Caco-2 (cell line): ENCODE measurements at regions of chr13 and their contacts with region 1.

Region 1: DNA sequence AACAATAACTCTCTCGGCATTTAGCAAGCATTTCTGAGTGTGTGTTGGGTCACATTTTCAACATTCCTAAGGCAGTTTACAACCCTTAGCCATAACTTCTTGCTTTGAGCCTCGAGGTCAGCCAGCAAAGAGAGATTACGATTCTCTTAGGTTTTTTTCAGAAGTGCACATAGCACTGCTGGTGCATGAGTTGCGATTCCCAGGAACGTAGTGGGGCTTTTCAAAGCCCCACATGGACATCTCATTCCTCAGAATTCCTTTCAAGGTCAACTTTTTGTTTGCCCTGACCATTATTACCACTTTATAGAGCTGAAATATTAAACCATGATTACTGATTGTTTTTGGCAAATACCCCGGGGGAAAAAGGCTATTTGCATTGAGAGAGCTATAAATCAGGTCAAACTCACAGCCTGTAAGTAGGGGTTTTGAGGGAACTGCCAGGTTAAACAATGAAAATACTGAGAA is 705.3 kb downstream of the GPC5 start:
- DNase-seq: peak; percentile 81 to 88
- H3K4me3 ChIP-seq: peak overlapping the region; percentile 11; the same call in 1 of the 2 replicates
- H3K4me3 Mint-ChIP-seq: peak overlapping the region; percentile 71
- H3K27ac Mint-ChIP-seq: peak overlapping the region; percentile 93
- H3K4me1 ChIP-seq: peaks cover 46% of the 10 kb centered on the region
- H3K4me1 Mint-ChIP-seq: peaks cover 26% of the 10 kb centered on the region
- H3K27me3 ChIP-seq: no peaks in the 10 kb centered on the region
- H3K27me3 Mint-ChIP-seq: no peaks in the 10 kb centered on the region
- CTCF ChIP-seq: no peak

Region 2: DNA sequence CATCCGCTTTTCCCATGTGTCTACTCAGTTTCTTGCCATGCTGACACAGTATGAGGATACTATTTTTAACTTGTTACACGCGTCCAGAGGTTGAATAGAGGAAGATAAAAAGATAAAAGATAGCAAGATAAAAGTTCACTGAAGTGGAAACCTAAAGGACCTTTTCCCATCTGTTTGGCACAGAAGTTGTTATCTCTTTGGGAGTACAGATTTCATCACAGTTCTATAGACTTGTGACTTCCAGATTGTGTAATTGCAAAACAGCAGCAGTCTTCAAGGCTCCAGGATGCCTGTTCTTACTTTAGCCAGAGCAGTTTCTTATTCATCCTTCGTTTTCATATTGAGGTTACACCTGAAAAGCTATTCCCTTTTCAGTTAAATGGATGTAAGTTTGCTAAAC is 336.1 kb before region 1 on chr13:
- CTCF ChIA-PET with region 1: no interaction called
- POLR2A ChIA-PET with region 1: no interaction called
- intact Hi-C with region 1: loop called (anchors 5 kb)
- DNase-seq: peak; percentile 52 to 60
- H3K4me3 ChIP-seq: no peak overlapping the region
- H3K4me3 Mint-ChIP-seq: peak overlapping the region; percentile 21
- H3K27ac Mint-ChIP-seq: peak overlapping the region; percentile 7
- H3K4me1 ChIP-seq: peaks cover 86% of the 10 kb centered on the region
- H3K4me1 Mint-ChIP-seq: peaks cover 53% of the 10 kb centered on the region
- H3K27me3 ChIP-seq: no peaks in the 10 kb centered on the region
- H3K27me3 Mint-ChIP-seq: no peaks in the 10 kb centered on the region
- CTCF ChIP-seq: no peak

Region 3: DNA sequence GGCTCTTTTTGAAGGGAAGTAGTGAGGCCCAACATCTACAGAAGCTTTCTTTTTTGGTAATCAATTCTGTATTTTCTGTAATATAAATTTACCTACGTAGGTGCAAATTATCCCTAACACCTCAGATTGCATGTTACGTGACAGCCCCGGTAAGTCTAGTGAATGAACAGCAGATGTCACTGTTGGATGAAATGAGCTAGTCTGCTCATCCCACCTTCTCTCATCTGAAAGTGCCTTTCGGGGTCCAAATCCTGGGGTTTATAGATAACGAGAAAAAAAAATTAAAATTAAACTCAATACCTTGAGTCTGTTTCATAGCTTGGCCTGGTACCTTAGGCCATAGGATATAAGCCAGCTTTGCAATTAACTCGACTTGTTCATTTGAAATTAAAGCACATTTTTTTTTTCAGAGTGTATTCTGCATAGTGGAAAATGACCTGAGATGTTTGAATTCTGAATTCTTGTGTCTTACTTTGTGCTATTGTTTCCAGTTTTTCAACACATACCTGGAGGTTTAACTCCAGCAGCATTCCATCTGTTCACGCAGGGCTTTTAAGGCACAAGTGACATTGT is 157.1 kb before region 1 on chr13:
- CTCF ChIA-PET with region 1: no interaction called
- POLR2A ChIA-PET with region 1: no interaction called
- intact Hi-C with region 1: loop called (anchors 1 kb)
- DNase-seq: peak in 1 of 2 experiments; percentile 26
- H3K4me3 ChIP-seq: no peak overlapping the region
- H3K4me3 Mint-ChIP-seq: no peak overlapping the region
- H3K27ac Mint-ChIP-seq: no peak overlapping the region
- H3K4me1 ChIP-seq: no peaks in the 10 kb centered on the region
- H3K4me1 Mint-ChIP-seq: no peaks in the 10 kb centered on the region
- H3K27me3 ChIP-seq: no peaks in the 10 kb centered on the region
- H3K27me3 Mint-ChIP-seq: peaks cover 8% of the 10 kb centered on the region
- CTCF ChIP-seq: peak; percentile 67 to 81

Region 4: DNA sequence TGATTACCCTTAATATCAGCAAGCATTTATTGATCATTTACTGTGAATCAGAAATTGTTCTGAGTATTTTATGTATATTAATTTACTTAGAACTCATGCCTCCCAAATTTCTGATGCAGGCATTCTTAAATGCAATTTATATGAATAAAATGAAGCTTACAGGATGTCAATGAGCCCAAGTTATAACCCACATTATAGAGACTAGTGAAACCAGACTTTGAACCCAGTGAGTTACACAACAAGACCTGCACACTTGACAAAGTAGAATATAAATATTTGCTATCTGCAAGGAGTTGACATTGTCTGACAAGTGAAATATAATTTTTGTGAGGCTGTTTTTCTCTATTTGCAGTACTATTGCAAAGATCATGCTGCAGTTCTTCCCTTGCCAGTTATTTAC is 49.3 kb before region 1 on chr13:
- CTCF ChIA-PET with region 1: no interaction called
- POLR2A ChIA-PET with region 1: no interaction called
- intact Hi-C with region 1: loop called (anchors 1 kb)
- DNase-seq: peak in 1 of 2 experiments; percentile 56
- H3K4me3 ChIP-seq: no peak overlapping the region
- H3K4me3 Mint-ChIP-seq: no peak overlapping the region
- H3K27ac Mint-ChIP-seq: no peak overlapping the region
- H3K4me1 ChIP-seq: peaks cover 11% of the 10 kb centered on the region
- H3K4me1 Mint-ChIP-seq: peaks cover 6% of the 10 kb centered on the region
- H3K27me3 ChIP-seq: no peaks in the 10 kb centered on the region
- H3K27me3 Mint-ChIP-seq: no peaks in the 10 kb centered on the region
- CTCF ChIP-seq: no peak

Region 5: DNA sequence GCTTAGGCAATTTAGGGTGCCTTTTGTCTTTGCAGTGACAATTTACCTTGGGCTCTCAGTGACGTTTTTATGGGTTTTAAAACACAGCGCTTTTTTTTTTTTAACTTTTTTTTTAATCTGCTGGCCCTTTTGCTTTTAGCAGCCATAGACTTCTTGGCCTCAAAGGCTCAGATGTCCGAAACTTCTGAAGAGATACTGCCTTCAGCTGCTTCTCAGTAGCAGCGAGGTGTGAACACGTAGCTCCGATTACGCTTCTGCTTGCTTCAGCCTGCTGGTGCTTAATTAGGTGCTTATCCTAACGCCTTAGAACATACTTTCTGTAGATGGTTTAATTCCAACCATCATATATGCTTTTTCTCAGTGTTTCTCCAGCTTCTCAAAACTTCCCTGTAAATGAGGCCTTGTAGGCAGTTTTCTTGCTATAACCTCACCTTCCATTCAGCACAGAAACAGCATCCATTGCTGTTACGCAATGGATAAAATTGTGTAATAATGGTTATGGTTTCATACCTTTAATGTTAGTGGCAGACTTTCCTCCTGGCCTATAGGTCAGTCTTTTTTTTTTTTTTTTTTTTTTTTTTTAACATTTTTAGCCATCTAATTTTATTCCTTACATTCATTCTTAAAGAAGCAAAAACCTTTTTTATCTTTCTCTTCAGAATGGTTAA is 18.6 kb after region 1 on chr13:
- CTCF ChIA-PET with region 1: no interaction called
- POLR2A ChIA-PET with region 1: no interaction called
- intact Hi-C with region 1: loop called (anchors 2 kb)
- DNase-seq: peak in 1 of 2 experiments; percentile 8
- H3K4me3 ChIP-seq: no peak overlapping the region
- H3K4me3 Mint-ChIP-seq: no peak overlapping the region
- H3K27ac Mint-ChIP-seq: no peak overlapping the region
- H3K4me1 ChIP-seq: no peaks in the 10 kb centered on the region
- H3K4me1 Mint-ChIP-seq: no peaks in the 10 kb centered on the region
- H3K27me3 ChIP-seq: no peaks in the 10 kb centered on the region
- H3K27me3 Mint-ChIP-seq: no peaks in the 10 kb centered on the region
- CTCF ChIP-seq: no peak

Region 6: DNA sequence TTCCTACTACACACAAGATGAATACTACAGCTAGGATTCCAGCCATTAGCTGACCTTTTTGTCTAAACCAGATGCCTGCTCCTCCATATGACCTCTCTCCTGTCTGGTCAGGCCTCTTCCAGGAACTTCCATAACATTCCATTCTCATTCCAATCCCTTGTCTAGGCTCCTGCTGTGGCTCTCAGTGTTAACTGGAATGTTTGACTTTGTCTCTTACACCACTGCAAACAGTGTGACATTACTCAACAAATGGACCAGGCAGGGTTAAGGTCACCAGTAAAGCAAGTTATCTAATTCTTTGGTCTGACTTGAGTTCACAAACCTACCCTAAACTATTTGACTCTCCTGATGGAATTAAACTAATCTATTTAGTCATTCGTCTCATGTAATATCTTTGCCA is 1120.8 kb after region 1 on chr13:
- CTCF ChIA-PET with region 1: no interaction called
- POLR2A ChIA-PET with region 1: no interaction called
- intact Hi-C with region 1: loop called (anchors 5 kb)
- DNase-seq: peak; percentile 72 to 80
- H3K4me3 ChIP-seq: no peak overlapping the region
- H3K4me3 Mint-ChIP-seq: peak overlapping the region; percentile 15
- H3K27ac Mint-ChIP-seq: peak overlapping the region; percentile 76
- H3K4me1 ChIP-seq: peaks cover 31% of the 10 kb centered on the region
- H3K4me1 Mint-ChIP-seq: peaks cover 38% of the 10 kb centered on the region
- H3K27me3 ChIP-seq: no peaks in the 10 kb centered on the region
- H3K27me3 Mint-ChIP-seq: no peaks in the 10 kb centered on the region
- CTCF ChIP-seq: no peak

Region 7: DNA sequence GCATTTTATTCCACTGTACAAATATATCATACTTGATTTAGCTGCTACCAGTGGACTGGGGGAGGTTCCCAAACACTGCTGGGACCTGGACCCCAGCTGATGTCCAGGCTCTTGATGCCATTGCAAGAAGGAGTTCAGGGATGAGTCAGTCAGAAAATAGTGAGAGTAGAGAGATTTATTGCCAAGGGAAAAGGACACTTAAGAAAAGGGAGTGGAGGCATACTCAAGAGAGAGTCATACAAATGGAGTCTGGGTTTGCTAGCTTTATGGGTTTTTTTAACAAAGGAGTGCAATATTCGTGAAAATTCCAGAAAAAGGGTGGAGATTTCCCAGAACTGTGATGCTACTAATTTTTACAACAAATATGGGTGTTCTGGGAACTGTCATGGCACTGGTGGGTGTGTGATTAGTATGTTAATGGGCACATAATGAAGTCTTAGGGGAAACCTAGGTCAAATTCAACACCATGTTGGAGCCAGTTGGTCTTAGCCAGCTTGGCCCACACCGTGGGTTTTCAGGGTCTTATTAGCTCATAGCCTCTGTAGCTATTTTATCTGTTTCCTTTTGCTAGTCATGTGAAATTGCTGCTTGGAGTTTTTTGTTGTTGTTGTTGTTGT is 1159.1 kb after region 1 on chr13:
- CTCF ChIA-PET with region 1: no interaction called
- POLR2A ChIA-PET with region 1: interaction called, 11 read pairs
- intact Hi-C with region 1: no loop called
- DNase-seq: no peak
- H3K4me3 ChIP-seq: no peak overlapping the region
- H3K4me3 Mint-ChIP-seq: no peak overlapping the region
- H3K27ac Mint-ChIP-seq: no peak overlapping the region
- H3K4me1 ChIP-seq: no peaks in the 10 kb centered on the region
- H3K4me1 Mint-ChIP-seq: no peaks in the 10 kb centered on the region
- H3K27me3 ChIP-seq: no peaks in the 10 kb centered on the region
- H3K27me3 Mint-ChIP-seq: no peaks in the 10 kb centered on the region
- CTCF ChIP-seq: no peak